Activated naive CD4-positive, alpha-beta T cell treated with anti-CD3 and anti-CD28 coated beads for 36 hours (primary cell): ENCODE measurements at regions of chr6 and their contacts with region 1.

Region 1: GRCh38 chr6:25975923-25976560 is 13.4 kb downstream of the TRIM38 start:
- DNase-seq: no peak
- H3K4me3 Mint-ChIP-seq: no peak overlapping the region
- H3K27ac Mint-ChIP-seq: peak overlapping the region; percentile 46
- H3K4me1 Mint-ChIP-seq: peaks cover 57% of the 10 kb centered on the region
- H3K27me3 Mint-ChIP-seq: no peaks in the 10 kb centered on the region

Region 2: DNA sequence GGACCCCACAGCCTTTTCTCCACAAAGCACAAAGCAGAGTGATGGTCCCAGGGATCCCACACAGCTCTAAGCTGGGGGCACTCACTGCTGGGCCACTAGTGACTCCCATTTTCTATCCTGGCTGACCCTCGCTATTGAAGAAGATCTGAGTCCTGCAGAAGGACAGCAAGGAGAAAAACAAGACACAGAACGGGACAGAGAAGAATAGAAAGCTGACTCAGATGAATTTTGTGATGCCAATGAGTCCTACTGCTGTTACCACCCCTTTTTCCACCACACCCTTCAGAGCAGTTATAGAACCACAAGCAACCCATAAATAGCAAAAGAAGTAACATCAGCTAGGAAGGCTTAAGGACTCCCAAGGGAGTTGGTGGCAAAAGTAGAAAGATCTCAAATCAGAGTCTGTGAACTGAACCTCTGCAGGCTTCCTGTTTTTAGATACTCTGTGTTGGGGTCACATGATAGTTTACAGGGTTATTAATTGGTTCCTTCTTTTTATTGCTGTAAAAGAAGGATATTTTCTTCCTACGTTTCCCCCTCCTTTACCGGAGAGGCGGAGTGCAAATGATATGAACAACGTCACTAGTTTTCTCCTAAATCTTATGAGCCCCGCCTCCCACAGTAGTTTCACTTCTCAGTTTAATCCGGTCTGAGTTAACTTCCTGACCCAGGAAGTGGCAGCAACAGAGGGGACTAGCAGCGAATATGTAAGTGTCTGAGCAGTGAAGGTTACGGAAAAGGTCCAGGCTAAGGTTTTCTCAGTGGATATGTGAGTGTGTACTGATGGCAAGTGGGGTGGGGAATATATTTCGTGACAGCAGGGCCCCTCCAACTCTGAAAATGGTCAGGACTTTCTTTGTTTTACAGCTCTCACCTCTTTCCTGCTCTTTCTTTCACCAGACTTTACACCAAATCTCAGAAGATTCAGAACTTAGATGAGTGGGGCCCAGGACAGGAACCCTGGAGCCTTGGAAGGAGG is 13.6 kb before region 1 on chr6 and contains the start of gene TRIM38:
- CTCF ChIA-PET with region 1: interaction called, 5 read pairs
- intact Hi-C with region 1: loop called (anchors 1 kb)
- DNase-seq: peak; percentile 91
- H3K4me3 Mint-ChIP-seq: peak within 1 kb of the TSS; percentile 99
- H3K27ac Mint-ChIP-seq: peak within 1 kb of the TSS; percentile 99
- H3K4me1 Mint-ChIP-seq: peaks cover 76% of the 10 kb centered on the region
- H3K27me3 Mint-ChIP-seq: no peaks in the 10 kb centered on the region
- total RNA-seq, gene TRIM38: 19.1 to 19.7 TPM

Region 3: GRCh38 chr6:26327450-26328264 is 351.6 kb after region 1 on chr6:
- CTCF ChIA-PET with region 1: no interaction called
- intact Hi-C with region 1: no loop called
- DNase-seq: peak; percentile 87
- H3K4me3 Mint-ChIP-seq: peak overlapping the region; percentile 80
- H3K27ac Mint-ChIP-seq: peak overlapping the region; percentile 88
- H3K4me1 Mint-ChIP-seq: peaks cover 41% of the 10 kb centered on the region
- H3K27me3 Mint-ChIP-seq: peaks cover 32% of the 10 kb centered on the region